OCI-LY7 (cell line): ENCODE measurements at regions of chr19 and their contacts with region 1.

Region 1: DNA sequence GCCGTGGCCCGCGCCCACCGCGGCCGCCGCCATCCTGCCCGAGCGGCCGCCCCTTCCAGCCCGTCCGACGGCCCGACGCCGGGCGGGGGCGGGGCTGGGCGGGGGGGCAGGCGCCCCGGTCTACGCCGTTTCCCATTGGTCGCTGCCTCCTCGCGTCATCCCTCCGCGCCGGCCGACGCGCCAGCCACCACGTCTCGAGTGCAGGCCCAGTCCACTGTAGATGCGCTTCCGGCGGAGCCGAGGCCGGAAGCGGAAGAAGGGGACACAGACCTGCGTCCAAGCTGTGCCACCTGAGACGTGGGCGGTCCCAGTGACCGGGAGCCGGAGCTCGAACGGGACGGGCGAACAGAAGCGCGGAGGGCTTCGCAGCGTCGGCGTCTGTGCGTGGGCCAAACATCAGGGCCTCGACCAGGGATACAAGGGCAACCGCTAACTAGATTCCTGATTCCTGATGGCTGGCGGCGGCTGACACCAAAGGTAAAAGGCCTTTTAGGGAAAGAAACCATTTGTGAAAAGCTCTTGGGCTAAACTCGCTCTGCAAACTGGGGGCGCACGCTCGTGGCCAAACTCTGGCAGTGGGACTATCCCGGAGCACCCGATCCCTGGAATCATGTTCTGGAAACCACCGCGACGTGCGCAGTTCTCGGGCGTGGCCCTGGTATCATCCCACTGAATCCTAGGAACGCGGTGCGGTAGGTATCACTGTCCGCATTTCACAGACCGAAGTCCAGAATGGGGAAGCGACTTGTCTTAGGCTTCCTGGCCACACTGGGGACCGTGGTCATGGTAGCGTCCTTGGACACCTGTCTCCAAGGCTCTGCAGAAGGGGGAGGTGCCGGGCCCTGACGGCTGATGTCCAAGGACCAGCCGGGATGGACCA is at the start of gene SLC35E1:
- DNase-seq: peak; percentile 95
- H3K4me3 ChIP-seq: peak within 1 kb of the TSS; percentile 83
- H3K27ac ChIP-seq: peak within 1 kb of the TSS; percentile 26
- H3K4me1 ChIP-seq: peaks cover 26% of the 10 kb centered on the region
- CTCF ChIP-seq: no peak
- total RNA-seq, gene SLC35E1: 17.3 and 21.1 TPM in 2 replicates

Region 2: DNA sequence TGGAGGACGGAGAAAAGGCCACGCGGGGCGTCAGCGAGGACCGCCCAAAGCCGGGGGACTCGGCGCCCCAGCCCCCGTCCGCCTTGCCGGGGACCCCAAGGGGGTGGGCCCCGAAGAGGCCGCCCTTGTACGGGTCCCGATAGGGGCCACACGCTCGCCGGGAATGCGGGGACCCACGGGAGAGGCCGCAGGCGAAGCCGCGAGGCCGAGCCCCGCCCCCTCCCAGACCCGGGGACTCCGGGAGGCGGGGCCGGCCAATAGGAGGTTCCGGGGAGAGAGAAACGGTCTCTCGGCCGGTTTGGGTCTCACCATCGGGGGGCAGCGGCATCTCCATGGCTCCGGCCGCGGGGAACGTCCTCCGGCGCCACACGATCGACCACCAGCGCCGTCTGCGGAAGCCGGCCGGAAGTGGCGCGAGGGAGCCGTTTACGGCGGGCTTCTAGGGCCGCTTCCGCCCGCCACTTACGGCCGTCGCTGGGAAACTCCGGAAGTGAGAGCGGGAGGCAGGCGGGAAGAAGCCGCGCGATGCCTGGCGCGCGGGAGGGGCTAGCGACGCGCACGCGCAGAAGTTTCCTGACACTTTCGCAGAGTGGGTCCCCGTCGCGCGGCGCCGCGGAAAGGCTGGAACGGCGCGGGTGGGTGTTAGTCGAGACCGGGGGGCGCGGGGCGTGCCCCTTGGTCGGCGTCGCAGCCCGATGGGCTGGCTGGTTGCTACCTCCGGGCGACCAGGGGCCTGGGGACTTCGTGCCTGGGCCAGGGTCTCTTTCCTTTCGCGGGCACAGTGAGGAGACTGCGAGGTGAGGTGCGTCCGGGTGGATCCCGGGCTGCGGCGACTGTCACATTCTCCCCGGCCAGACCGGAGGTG is 30.3 kb before region 1 on chr19 and contains the start of gene CHERP:
- CTCF ChIA-PET with region 1: no interaction called
- POLR2A ChIA-PET with region 1: no interaction called
- intact Hi-C with region 1: loop called (anchors 1 kb)
- DNase-seq: peak; percentile 98
- H3K4me3 ChIP-seq: peak within 1 kb of the TSS; percentile 96
- H3K27ac ChIP-seq: peak within 1 kb of the TSS; percentile 71
- H3K4me1 ChIP-seq: peaks cover 33% of the 10 kb centered on the region
- CTCF ChIP-seq: 0 out of 2 replicates have a peak, but pooled peaks have one; percentile 21
- total RNA-seq, gene CHERP: 14.6 and 15.6 TPM in 2 replicates